ENCODE measurements at regions of chr18 and their contacts with region 1.

Region 1: DNA sequence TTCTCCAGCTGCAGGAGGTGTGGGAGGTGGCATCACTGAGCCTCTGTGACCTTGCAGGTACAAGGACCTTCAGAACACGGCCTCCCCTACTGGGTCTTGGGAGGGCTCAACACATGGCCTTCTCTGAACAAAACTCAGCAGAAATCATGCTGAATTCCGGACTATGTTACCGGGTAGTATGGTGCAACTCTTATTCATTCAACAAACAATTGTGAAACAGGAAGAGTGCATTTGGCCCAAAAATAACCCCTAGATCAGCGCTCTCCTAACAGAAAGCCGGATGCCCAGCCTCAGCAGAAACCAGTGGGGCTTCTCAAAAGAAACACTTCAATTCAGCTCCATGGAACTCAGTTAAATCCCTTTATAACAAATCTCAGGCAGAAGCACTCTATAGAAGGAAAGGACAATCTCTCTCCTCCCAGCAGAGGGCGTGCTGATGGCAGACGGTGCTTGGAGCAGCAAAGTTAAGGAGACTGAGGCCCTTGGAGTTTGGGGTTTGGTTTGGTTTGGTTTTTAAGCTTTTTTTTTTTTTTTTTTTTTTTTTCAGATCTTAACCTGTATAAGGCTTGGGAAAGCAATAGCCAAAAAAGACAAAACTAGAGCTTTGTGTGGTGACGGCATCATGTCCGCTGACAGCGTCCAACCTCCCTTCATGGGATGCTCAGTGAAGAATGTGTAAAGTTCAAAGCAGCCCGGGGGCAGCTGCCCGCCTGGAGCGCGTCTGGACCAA is 104.2 kb upstream of the SALL3 start:
- DNase-seq: peak; percentile 36 to 73
- H3K4me3 ChIP-seq: no peak overlapping the region
- H3K27ac ChIP-seq: no peak overlapping the region
- H3K4me1 ChIP-seq: no peaks in the 10 kb centered on the region; a peak in 1 of 7 replicates
- H3K27me3 ChIP-seq: peaks cover 0 to 2% (median 0%) of the 10 kb centered on the region in 4 experiments; a peak in 1 of 7 replicates
- CTCF ChIP-seq: peak; percentile 75 to 84 (median 78)
- EP300 ChIP-seq: no peak
- POLR2A ChIP-seq: no peak
- RAD21 ChIP-seq: peak; percentile 65 to 71

Region 2: DNA sequence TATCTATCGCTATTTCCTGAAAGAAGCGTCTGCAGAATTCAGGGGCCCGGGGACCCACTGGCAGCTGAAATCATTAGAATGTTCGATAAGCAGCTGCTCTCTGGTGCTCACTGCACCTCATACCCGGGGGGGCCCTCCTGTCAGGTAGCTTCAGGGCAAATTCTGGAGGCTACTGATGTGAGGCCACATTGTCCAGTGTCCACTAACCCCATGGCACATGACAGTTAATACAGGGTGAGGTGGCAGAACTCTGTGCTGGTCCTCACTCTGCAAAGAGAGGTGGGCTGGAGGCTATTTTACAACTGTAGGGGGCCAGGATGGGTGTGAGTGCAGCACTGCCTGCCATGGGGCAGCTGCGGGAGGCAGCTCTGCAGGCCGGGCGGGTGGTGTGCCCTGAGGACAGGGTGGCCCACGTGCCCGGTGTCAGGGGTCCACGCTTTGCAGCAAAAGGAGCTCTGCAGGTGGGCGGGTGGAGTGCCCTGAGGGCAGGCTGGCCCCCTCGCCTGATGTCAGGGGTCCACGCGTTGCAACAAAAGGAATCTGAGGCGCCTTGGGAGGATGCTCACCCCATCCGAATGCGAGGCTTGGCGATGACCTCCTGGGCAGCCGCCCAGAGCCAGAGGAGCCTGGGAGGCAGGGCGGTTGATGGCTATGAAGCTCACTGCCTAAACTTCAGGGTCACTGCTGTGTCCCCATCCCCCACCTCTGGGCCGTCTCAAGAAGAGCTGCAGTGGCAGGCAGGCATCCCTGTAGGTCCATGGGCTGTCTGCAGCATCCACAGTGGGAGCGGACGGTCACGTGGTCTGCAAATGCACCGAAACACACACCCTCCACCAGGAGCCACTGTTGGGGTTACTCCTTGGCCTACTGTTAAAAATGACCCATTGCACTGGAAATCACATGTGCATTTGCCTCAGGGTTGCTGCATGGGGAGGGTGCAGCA is 102.8 kb before region 1 on chr18:
- CTCF ChIA-PET with region 1: interaction called, 10 read pairs
- POLR2A ChIA-PET with region 1: no interaction called
- DNase-seq: no peak
- H3K4me3 ChIP-seq: no peak overlapping the region
- H3K27ac ChIP-seq: no peak overlapping the region
- H3K4me1 ChIP-seq: peaks cover 0 to 24% (median 5%) of the 10 kb centered on the region in 4 experiments; a peak in 4 of 7 replicates
- H3K27me3 ChIP-seq: no peaks in the 10 kb centered on the region
- CTCF ChIP-seq: no peak
- EP300 ChIP-seq: no peak
- POLR2A ChIP-seq: no peak
- RAD21 ChIP-seq: no peak

Region 3: GRCh38 chr18:78861116-78861515 is 14.3 kb before region 1 on chr18:
- CTCF ChIA-PET with region 1: interaction called, 35 read pairs
- POLR2A ChIA-PET with region 1: no interaction called
- DNase-seq: no peak
- H3K4me3 ChIP-seq: no peak overlapping the region
- H3K27ac ChIP-seq: no peak overlapping the region
- H3K4me1 ChIP-seq: no peaks in the 10 kb centered on the region; a peak in 1 of 7 replicates
- H3K27me3 ChIP-seq: no peaks in the 10 kb centered on the region
- CTCF ChIP-seq: no peak
- EP300 ChIP-seq: no peak
- POLR2A ChIP-seq: no peak
- RAD21 ChIP-seq: no peak

Region 4: GRCh38 chr18:78893278-78894035 is 18.0 kb after region 1 on chr18:
- CTCF ChIA-PET with region 1: interaction called, 11 read pairs
- POLR2A ChIA-PET with region 1: no interaction called
- DNase-seq: no peak
- H3K4me3 ChIP-seq: no peak overlapping the region
- H3K27ac ChIP-seq: no peak overlapping the region
- H3K4me1 ChIP-seq: no peaks in the 10 kb centered on the region
- H3K27me3 ChIP-seq: no peaks in the 10 kb centered on the region
- CTCF ChIP-seq: no peak
- EP300 ChIP-seq: no peak
- POLR2A ChIP-seq: no peak
- RAD21 ChIP-seq: no peak

Region 5: DNA sequence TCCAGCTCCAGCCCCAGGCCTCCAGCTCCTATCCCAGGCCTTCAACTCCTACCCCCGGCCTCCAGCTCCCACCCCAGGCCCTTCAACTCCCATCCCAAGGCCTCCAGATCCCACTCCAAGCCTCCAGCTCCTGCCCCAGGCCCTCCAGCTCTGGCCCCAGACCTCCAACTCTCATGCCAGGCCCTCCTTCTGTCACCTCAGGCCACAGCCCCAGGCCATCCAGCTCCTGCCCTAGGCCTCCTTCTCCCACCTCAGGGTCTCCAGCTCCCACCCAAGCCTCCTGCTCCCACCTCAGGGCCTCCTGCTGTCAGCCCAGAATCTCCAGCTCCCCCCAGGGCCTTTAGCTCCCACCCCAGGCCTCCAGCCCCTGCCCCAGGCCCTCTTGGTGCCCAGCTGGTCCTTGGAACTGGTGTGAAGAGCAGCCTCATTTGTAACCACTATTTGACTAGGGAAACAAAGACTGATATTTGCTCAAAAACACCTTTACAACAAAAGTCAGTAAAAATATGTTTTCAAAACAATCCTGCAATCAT is 36.4 kb after region 1 on chr18:
- CTCF ChIA-PET with region 1: interaction called, 11 read pairs
- POLR2A ChIA-PET with region 1: no interaction called
- DNase-seq: peak in 1 of 2 experiments; percentile 8
- H3K4me3 ChIP-seq: no peak overlapping the region
- H3K27ac ChIP-seq: no peak overlapping the region
- H3K4me1 ChIP-seq: no peaks in the 10 kb centered on the region
- H3K27me3 ChIP-seq: no peaks in the 10 kb centered on the region
- CTCF ChIP-seq: no peak
- EP300 ChIP-seq: no peak
- POLR2A ChIP-seq: no peak
- RAD21 ChIP-seq: no peak